ENCODE measurements at regions of chr1 and their contacts with region 1.

Region 1: GRCh38 chr1:175154629-175155472 is 37.7 kb downstream of the KIAA0040 start:
- DNase-seq: peak; percentile 70 to 77
- H3K4me3 ChIP-seq: no peak overlapping the region
- H3K4me3 Mint-ChIP-seq: no peak overlapping the region
- H3K27ac Mint-ChIP-seq: no peak overlapping the region
- H3K4me1 ChIP-seq: no peaks in the 10 kb centered on the region; the same call in 1 of the 2 replicates
- H3K4me1 Mint-ChIP-seq: peaks cover 8% of the 10 kb centered on the region
- H3K27me3 ChIP-seq: no peaks in the 10 kb centered on the region
- H3K27me3 Mint-ChIP-seq: peaks cover 6% of the 10 kb centered on the region
- CTCF ChIP-seq: peak; percentile 91 to 93

Region 2: DNA sequence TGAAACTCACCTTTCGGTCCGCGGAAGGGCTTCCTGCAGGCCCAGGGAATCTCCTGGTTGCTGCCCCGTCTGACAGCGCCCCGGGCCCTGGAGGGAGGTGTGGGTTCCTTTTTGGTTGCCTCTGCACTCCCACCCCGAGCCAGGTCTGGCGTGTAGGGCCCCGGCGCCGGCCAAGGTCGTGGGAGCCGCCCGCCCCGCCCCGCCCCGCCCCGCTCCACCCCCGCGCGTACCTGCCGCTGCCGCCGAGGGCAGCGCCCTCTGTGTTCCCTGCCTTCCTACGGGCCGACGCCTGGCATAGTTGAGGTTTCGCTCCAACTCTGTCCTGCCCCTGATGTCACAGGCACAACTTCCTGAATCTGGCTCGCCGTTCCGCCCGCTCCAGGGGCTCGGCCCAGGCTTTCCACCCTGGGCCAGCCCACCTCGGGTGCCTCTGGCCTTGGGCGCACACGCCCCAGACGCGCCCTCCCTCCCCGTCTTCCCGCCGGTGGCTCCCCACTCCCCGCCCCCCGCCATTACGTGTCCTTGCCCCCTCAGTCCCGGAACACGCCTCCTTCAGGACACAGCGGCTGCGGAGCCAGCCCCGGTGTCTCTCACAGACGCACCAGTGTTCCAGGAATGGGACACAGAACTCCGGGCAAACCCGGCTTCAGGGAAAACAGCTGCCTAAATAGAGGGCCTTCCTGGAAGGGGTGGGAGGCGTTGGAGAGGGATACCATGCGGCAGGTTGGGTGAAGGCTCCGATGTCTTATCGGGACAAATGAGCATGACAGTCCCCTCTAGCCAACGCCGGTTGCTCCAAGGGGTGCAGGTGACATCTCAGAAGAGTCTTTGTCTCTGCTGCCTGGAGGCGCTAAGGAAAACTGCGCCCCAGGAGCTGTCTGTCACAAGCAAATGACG is 38.0 kb after region 1 on chr1 and contains the start of gene KIAA0040:
- CTCF ChIA-PET with region 1: interaction called, 5 read pairs
- POLR2A ChIA-PET with region 1: no interaction called
- intact Hi-C with region 1: loop called (anchors 1 kb)
- DNase-seq: peak; percentile 79 to 81
- H3K4me3 ChIP-seq: peak within 1 kb of the TSS; percentile 67
- H3K4me3 Mint-ChIP-seq: peak within 1 kb of the TSS; percentile 87
- H3K27ac Mint-ChIP-seq: peak within 1 kb of the TSS; percentile 94
- H3K4me1 ChIP-seq: no peaks in the 10 kb centered on the region
- H3K4me1 Mint-ChIP-seq: peaks cover 14% of the 10 kb centered on the region
- H3K27me3 ChIP-seq: no peaks in the 10 kb centered on the region
- H3K27me3 Mint-ChIP-seq: no peaks in the 10 kb centered on the region
- CTCF ChIP-seq: peak in 1 of 2 experiments; percentile 37
- total RNA-seq, gene KIAA0040: 18.9 and 24.9 TPM in 2 replicates

Region 3: DNA sequence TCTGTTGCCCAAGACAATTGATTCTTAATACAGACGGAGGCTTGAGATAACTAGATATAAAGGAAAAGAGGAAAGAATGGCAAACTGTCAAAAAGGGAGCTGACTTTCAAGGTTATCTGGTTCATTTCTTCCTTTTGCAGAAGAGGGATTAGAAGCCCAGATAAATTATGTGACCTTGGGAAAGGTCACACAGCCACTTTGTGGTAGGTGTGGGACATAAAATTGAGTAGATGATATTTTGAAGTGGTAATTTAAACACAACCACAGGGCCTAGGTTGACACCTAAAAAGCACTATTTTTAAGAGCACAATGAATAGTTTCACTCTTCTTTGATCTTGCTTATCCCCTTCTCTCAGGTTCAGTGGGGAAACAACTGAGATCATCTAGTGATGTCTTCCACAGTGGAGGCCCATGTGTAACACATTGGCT is 54.7 kb after region 1 on chr1:
- CTCF ChIA-PET with region 1: no interaction called
- POLR2A ChIA-PET with region 1: no interaction called
- intact Hi-C with region 1: no loop called
- DNase-seq: no peak
- H3K4me3 ChIP-seq: no peak overlapping the region
- H3K4me3 Mint-ChIP-seq: no peak overlapping the region
- H3K27ac Mint-ChIP-seq: no peak overlapping the region
- H3K4me1 ChIP-seq: no peaks in the 10 kb centered on the region
- H3K4me1 Mint-ChIP-seq: no peaks in the 10 kb centered on the region
- H3K27me3 ChIP-seq: no peaks in the 10 kb centered on the region
- H3K27me3 Mint-ChIP-seq: no peaks in the 10 kb centered on the region
- CTCF ChIP-seq: no peak

Region 4: DNA sequence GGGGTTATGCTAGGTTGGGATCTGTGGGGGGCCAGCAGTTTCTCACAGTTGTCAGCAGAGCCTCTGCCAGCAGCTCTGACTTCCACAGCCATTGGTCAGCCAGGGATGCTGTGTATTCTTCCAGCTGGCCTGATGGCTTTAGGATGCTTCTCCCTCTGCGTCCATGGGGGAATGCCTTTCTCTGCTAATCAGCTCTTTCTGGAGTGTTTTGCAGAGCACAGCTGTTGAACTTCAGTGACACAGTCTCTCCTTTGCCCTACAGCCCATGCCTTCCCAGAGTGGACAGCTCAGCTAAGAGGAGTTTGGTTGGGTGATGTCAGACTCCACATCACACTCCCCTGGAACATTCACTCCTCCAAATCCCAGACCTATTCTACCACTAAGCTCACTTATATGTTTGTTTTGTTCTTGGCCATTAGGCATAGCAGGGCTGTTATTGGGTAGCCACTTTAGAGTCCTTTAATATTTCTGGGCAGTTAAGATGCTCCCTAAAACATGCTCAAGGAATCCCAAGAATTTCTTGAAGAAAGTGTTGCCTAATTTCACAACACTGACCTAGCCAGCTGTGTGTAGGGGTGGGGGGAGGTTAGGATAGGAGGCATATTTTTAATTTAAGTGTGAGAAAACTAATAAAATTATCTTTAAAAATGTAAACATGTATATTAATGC is 113.0 kb after region 1 on chr1:
- CTCF ChIA-PET with region 1: interaction called, 3 read pairs
- POLR2A ChIA-PET with region 1: no interaction called
- intact Hi-C with region 1: loop called (anchors 2 kb)
- DNase-seq: peak in 1 of 2 experiments; percentile 33
- H3K4me3 ChIP-seq: no peak overlapping the region
- H3K4me3 Mint-ChIP-seq: peak overlapping the region; percentile 8
- H3K27ac Mint-ChIP-seq: peak overlapping the region; percentile 96
- H3K4me1 ChIP-seq: peaks cover 63% of the 10 kb centered on the region
- H3K4me1 Mint-ChIP-seq: peaks cover 46% of the 10 kb centered on the region
- H3K27me3 ChIP-seq: no peaks in the 10 kb centered on the region
- H3K27me3 Mint-ChIP-seq: no peaks in the 10 kb centered on the region
- CTCF ChIP-seq: no peak

Region 5: DNA sequence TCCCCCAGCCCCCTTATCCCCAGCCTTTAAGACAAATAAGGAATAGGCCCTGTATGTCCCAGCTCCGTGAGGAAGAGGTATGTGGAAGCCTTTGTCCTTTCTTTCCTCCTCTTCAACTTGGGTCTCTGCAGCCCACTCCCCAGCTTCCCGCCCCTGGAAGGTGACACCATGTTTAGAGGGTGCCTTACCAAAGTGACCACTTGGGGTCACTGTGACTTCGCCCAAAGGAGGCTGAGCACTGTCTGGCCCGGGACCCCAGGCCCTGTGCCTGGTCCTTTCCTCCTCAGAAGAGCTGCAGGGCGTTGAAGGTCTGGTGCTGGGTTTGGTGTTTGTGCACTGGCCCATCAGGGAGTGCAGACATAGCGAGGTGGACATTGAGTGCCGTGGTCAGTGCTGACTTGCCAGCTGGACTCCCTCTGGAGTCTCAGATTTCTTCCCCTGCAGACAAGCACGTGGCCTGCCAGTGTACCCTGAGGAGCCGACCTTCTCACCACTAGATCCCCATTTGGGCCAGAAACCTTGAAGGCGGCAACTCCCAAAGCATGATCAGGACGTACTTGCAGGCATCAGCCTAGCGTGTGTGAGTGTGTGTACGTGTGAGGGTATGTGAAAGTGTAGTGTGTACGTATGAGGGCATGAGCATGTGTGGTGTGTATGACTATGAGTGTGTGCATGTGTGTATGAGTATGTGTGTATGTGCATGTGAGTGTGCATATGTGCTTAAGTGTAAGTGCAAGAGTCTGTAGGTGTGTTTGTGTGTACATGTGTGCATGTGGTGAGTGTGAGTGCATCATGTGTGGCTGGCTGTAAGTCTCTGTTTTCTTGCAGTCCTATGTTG is 219.2 kb after region 1 on chr1:
- CTCF ChIA-PET with region 1: interaction called, 10 read pairs
- POLR2A ChIA-PET with region 1: no interaction called
- intact Hi-C with region 1: loop called (anchors 5 kb)
- DNase-seq: peak; percentile 50 to 65
- H3K4me3 ChIP-seq: no peak overlapping the region
- H3K4me3 Mint-ChIP-seq: no peak overlapping the region
- H3K27ac Mint-ChIP-seq: no peak overlapping the region
- H3K4me1 ChIP-seq: peaks cover 5% of the 10 kb centered on the region; the same call in 1 of the 2 replicates
- H3K4me1 Mint-ChIP-seq: peaks cover 7% of the 10 kb centered on the region
- H3K27me3 ChIP-seq: no peaks in the 10 kb centered on the region
- H3K27me3 Mint-ChIP-seq: no peaks in the 10 kb centered on the region
- CTCF ChIP-seq: peak; percentile 86 to 87

Region 6: GRCh38 chr1:175742790-175743459 is 588.1 kb after region 1 on chr1:
- CTCF ChIA-PET with region 1: interaction called, 9 read pairs
- POLR2A ChIA-PET with region 1: no interaction called
- intact Hi-C with region 1: loop called (anchors 1 kb)
- DNase-seq: peak in 1 of 2 experiments; percentile 46
- H3K4me3 ChIP-seq: no peak overlapping the region
- H3K4me3 Mint-ChIP-seq: no peak overlapping the region
- H3K27ac Mint-ChIP-seq: no peak overlapping the region
- H3K4me1 ChIP-seq: no peaks in the 10 kb centered on the region
- H3K4me1 Mint-ChIP-seq: peaks cover 13% of the 10 kb centered on the region
- H3K27me3 ChIP-seq: no peaks in the 10 kb centered on the region
- H3K27me3 Mint-ChIP-seq: peaks cover 12% of the 10 kb centered on the region
- CTCF ChIP-seq: no peak

Region 7: GRCh38 chr1:176466514-176467220 is 1311.8 kb after region 1 on chr1:
- CTCF ChIA-PET with region 1: no interaction called
- POLR2A ChIA-PET with region 1: no interaction called
- intact Hi-C with region 1: loop called (anchors 5 kb)
- DNase-seq: peak; percentile 36 to 51
- H3K4me3 ChIP-seq: no peak overlapping the region
- H3K4me3 Mint-ChIP-seq: no peak overlapping the region
- H3K27ac Mint-ChIP-seq: no peak overlapping the region
- H3K4me1 ChIP-seq: no peaks in the 10 kb centered on the region
- H3K4me1 Mint-ChIP-seq: no peaks in the 10 kb centered on the region
- H3K27me3 ChIP-seq: peaks cover 2% of the 10 kb centered on the region; the same call in 1 of the 2 replicates
- H3K27me3 Mint-ChIP-seq: peaks cover 6% of the 10 kb centered on the region
- CTCF ChIP-seq: peak; percentile 64 to 83

Measured in Caco-2 (cell line).